A549 (cell line): ENCODE measurements at regions of chr9 and their contacts with region 1.

Region 1: GRCh38 chr9:125153712-125154367 is 10.5 kb upstream of the SCAI start:
- DNase-seq: no peak
- ATAC-seq: no peak
- H3K4me3 ChIP-seq: no peak overlapping the region
- H3K27ac ChIP-seq: no peak overlapping the region
- H3K4me1 ChIP-seq: no peaks in the 10 kb centered on the region
- CTCF ChIP-seq: no peak
- EP300 ChIP-seq: no peak
- POLR2A ChIP-seq: no peak
- RAD21 ChIP-seq: no peak

Region 2: GRCh38 chr9:124940693-124941453 is 213.0 kb before region 1 on chr9 and contains the start of gene GOLGA1:
- CTCF ChIA-PET with region 1: no interaction called
- POLR2A ChIA-PET with region 1: no interaction called
- DNase-seq: peak; percentile 90 to 94
- ATAC-seq: peak; percentile 94 to 97
- H3K4me3 ChIP-seq: peak within 1 kb of the TSS; percentile 60
- H3K27ac ChIP-seq: peak within 1 kb of the TSS; percentile 89 to 97
- H3K4me1 ChIP-seq: peaks cover 11% of the 10 kb centered on the region; the same call in 2 of the 3 replicates
- CTCF ChIP-seq: no peak
- EP300 ChIP-seq: no peak
- POLR2A ChIP-seq: peak; percentile 81
- RAD21 ChIP-seq: no peak
- polyA plus RNA-seq, gene GOLGA1: 19.4 and 29.5 TPM in 2 replicates

Region 3: DNA sequence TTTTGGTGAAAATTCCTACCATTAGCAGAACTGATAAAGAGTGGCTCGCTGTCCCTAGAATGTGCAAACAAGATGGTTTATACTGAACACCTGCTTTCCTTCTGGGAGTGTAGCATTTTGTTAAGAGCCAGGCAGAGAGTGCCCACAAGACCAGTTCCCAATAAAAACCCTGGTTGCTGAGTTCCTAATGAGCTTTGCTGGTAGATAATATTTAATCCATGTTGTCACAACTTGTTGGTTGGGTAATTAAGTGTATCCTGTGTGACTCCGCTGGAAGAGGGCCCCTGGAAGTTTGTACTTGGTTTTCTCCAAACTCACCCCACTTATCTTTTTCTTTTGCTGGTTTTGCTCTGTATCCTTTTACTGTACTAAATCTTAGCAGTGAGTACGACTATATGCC is 173.4 kb before region 1 on chr9:
- CTCF ChIA-PET with region 1: no interaction called
- POLR2A ChIA-PET with region 1: no interaction called
- DNase-seq: no peak
- ATAC-seq: no peak
- H3K4me3 ChIP-seq: no peak overlapping the region
- H3K27ac ChIP-seq: no peak overlapping the region
- H3K4me1 ChIP-seq: no peaks in the 10 kb centered on the region
- CTCF ChIP-seq: no peak
- EP300 ChIP-seq: no peak
- POLR2A ChIP-seq: no peak
- RAD21 ChIP-seq: no peak

Region 4: DNA sequence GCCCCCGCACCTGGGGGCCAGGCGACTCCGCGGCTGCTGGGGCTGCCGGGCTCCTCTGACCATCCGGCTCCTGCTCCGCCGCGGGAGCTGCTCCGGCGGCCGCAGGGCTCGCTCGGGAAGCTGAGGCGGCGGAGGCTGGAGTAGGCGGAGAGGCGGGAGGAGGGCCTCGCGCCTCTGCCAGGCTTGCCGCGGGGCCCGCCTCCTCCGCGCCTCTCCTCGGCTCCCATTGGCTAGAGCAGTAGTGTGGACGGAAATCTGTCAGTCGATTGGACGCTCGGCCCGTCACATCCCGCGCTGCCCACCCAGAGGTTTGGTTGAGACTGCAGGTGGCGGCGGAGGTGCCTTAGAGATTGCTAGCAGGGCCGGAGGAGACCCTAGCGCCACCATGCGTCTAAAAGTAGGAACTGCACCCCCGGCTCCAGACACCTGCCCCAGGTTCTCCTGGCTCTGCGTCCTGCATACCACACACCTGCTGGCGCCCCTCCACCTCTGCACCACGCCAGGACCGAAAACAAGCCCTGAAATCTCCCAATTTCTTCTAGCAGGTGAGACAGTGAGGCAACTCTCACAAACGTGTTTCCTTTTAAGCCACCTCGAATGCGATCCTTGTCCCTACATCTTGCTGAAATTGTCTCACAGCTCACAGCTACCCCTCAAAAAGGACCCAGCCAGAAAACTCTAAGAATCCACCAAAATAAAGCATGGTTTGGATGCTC is 10.3 kb before region 1 on chr9 and contains the start of gene SCAI:
- CTCF ChIA-PET with region 1: interaction called, 14 read pairs
- POLR2A ChIA-PET with region 1: no interaction called
- DNase-seq: peak; percentile 98 to 99
- ATAC-seq: peak; percentile 99 to 100
- H3K4me3 ChIP-seq: peak within 1 kb of the TSS; percentile 88
- H3K27ac ChIP-seq: peak within 1 kb of the TSS; percentile 89 to 95
- H3K4me1 ChIP-seq: peaks cover 9% of the 10 kb centered on the region; the same call in 2 of the 3 replicates
- CTCF ChIP-seq: peak; percentile 81
- EP300 ChIP-seq: no peak
- POLR2A ChIP-seq: peak; percentile 55
- RAD21 ChIP-seq: peak; percentile 76 to 78
- polyA plus RNA-seq, gene SCAI: 5.0 and 6.8 TPM in 2 replicates

Region 5: DNA sequence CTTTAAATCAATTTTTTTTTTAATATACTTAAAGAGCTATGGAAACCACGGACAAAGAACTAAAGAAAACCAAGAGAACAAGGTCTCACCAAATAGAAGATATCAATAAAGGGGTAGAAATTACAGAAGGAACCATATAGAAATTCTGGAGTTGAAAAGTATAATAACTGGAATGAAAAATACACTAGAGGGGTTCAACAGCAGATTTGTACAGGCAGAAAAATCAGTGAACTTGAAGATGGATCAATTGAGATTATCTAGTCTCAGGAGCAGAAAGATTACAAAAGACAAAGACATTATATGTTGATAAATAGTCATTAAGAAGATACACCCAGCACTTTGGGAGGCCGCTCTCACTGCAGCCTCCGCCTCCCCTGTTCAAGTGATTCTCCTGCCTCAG is 163.9 kb after region 1 on chr9:
- CTCF ChIA-PET with region 1: no interaction called
- POLR2A ChIA-PET with region 1: no interaction called
- DNase-seq: no peak
- ATAC-seq: no peak
- H3K4me3 ChIP-seq: no peak overlapping the region
- H3K27ac ChIP-seq: no peak overlapping the region
- H3K4me1 ChIP-seq: no peaks in the 10 kb centered on the region
- CTCF ChIP-seq: no peak
- EP300 ChIP-seq: no peak
- POLR2A ChIP-seq: no peak
- RAD21 ChIP-seq: no peak